CD8-positive, alpha-beta T cell (primary cell): ENCODE measurements at regions of chr9 and their contacts with region 1.

Region 1: GRCh38 chr9:127568971-127569885 is 42.8 kb upstream of the STXBP1 start:
- DNase-seq: peak; percentile 49 to 87 (median 73)
- ATAC-seq: peak; percentile 85
- H3K4me3 ChIP-seq: peak overlapping the region; percentile 63 to 65
- H3K4me3 Mint-ChIP-seq: peak overlapping the region; percentile 83
- H3K27ac ChIP-seq: peak overlapping the region; percentile 4 to 21
- H3K27ac Mint-ChIP-seq: peak overlapping the region; percentile 87
- H3K4me1 ChIP-seq: peaks cover 30% of the 10 kb centered on the region
- H3K4me1 Mint-ChIP-seq: peaks cover 20% of the 10 kb centered on the region
- H3K27me3 ChIP-seq: no peaks in the 10 kb centered on the region
- H3K27me3 Mint-ChIP-seq: no peaks in the 10 kb centered on the region
- CTCF ChIP-seq: no peak

Region 2: GRCh38 chr9:127611899-127612790 is 42.9 kb after region 1 on chr9 and contains the start of gene STXBP1:
- CTCF ChIA-PET with region 1: no interaction called
- POLR2A ChIA-PET with region 1: interaction called, 3 read pairs
- intact Hi-C with region 1: loop called in 1 of 2 experiments (anchors 2 kb)
- DNase-seq: peak; percentile 70 to 92 (median 83)
- ATAC-seq: peak; percentile 80
- H3K4me3 ChIP-seq: peak within 1 kb of the TSS; percentile 59 to 82
- H3K4me3 Mint-ChIP-seq: peak within 1 kb of the TSS; percentile 93
- H3K27ac ChIP-seq: peak within 1 kb of the TSS in 1 of 2 experiments; percentile 42
- H3K27ac Mint-ChIP-seq: peak within 1 kb of the TSS; percentile 92
- H3K4me1 ChIP-seq: peaks cover 32% of the 10 kb centered on the region
- H3K4me1 Mint-ChIP-seq: peaks cover 36% of the 10 kb centered on the region
- H3K27me3 ChIP-seq: peaks cover 4 to 9% of the 10 kb centered on the region in 2 experiments
- H3K27me3 Mint-ChIP-seq: peaks cover 9% of the 10 kb centered on the region
- CTCF ChIP-seq: no peak
- total RNA-seq, gene STXBP1: 7.7 to 8.9 TPM

Region 3: DNA sequence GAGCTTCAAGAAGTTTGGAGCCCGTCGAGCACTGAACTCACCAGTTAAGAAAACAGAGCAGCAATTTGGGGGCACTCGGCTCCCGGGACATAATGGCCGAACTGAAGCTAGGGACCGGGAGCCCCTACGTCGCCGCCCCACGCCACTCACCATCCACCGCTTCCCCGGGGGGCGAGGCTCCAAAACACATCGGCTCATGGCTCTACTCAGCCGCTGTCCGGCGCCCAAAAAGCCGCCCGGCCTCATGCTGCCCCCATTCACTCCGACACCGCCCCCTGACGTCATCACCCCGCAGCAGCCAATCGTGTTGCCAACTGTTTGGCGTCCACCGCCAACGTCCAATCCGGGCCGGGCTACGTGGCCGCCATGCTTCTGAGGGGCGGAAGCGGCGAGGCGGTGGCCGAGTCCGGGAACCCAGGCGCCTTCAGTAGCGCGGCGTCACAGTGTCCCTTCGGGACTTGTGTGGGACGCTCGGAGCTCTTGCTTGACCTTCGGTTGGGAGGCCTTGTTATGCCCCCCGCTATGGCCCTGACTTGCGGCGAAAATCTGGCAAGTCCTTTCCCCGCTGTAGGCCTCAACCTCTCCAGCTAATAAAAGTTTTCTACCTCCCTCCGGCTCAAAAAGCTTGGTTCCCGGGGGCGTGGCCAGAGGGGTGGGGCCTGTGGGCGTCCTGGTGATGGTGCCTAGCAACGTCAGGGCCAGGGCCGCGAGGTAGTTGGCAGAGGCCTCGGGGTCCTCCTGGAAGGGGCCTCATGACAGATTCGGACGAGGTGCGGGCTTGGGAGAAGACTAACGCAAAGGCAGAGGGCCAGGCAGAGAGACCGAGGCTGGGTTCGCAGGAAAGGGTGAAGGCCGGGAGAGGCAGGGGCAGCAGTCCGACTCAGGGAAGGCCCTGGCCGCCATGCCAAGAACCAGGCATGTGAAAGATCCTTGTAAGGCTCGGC is 146.4 kb after region 1 on chr9 and contains the starts of genes PTRH1 and TTC16:
- CTCF ChIA-PET with region 1: no interaction called
- POLR2A ChIA-PET with region 1: no interaction called
- intact Hi-C with region 1: loop called in 1 of 2 experiments (anchors 5 kb)
- DNase-seq: peak; percentile 88 to 98 (median 97)
- ATAC-seq: peak; percentile 93
- H3K4me3 ChIP-seq: peak within 1 kb of the TSS; percentile 88 to 96
- H3K4me3 Mint-ChIP-seq: peak within 1 kb of the TSS; percentile 98
- H3K27ac ChIP-seq: peak within 1 kb of the TSS; percentile 80 to 83
- H3K27ac Mint-ChIP-seq: peak within 1 kb of the TSS; percentile 96
- H3K4me1 ChIP-seq: peaks cover 47% of the 10 kb centered on the region
- H3K4me1 Mint-ChIP-seq: peaks cover 44% of the 10 kb centered on the region
- H3K27me3 ChIP-seq: no peaks in the 10 kb centered on the region
- H3K27me3 Mint-ChIP-seq: no peaks in the 10 kb centered on the region
- CTCF ChIP-seq: no peak
- total RNA-seq, gene PTRH1: 4.6 to 5.3 TPM
- total RNA-seq, gene TTC16: 5.2 to 5.5 TPM

Region 4: DNA sequence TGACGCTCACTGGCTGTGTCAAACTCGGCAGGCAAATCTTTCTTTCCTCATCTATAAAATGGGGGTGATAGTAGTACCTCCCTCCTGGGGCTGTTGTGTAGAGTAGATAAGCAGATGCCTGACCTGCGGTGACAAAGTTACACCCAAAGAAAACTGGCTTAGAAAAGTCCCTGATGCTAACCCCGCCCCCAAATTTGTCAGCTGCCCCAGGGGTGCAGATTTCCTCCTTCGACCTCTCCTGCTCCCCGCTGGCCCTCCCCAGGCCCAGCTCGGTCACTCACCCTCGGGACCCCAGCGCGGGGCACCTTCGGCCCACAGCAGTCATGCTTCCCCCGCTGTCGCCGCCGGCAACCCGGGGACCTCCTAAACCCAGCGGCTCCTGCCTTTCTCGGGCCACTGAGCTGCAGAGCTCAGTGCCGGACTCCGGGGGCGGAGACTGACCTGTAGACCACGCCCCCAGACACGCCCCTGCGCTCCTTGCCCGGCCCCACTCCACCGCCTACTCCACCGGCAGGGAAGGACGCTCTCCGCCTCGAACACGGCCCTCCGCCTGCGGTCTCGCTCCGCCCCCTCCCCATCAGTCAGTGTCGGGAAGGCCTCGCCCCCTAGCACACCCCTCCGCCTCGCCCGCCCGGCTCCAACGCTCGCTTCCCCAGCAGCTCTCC is 201.8 kb after region 1 on chr9:
- CTCF ChIA-PET with region 1: no interaction called
- POLR2A ChIA-PET with region 1: no interaction called
- intact Hi-C with region 1: loop called in 1 of 2 experiments (anchors 1 kb)
- DNase-seq: peak; percentile 81 to 96 (median 93)
- ATAC-seq: peak; percentile 79
- H3K4me3 ChIP-seq: peak overlapping the region; percentile 55 to 65
- H3K4me3 Mint-ChIP-seq: peak overlapping the region; percentile 88
- H3K27ac ChIP-seq: peak overlapping the region; percentile 58 to 83
- H3K27ac Mint-ChIP-seq: peak overlapping the region; percentile 96
- H3K4me1 ChIP-seq: peaks cover 75% of the 10 kb centered on the region
- H3K4me1 Mint-ChIP-seq: peaks cover 73% of the 10 kb centered on the region
- H3K27me3 ChIP-seq: no peaks in the 10 kb centered on the region
- H3K27me3 Mint-ChIP-seq: no peaks in the 10 kb centered on the region
- CTCF ChIP-seq: no peak

Region 5: DNA sequence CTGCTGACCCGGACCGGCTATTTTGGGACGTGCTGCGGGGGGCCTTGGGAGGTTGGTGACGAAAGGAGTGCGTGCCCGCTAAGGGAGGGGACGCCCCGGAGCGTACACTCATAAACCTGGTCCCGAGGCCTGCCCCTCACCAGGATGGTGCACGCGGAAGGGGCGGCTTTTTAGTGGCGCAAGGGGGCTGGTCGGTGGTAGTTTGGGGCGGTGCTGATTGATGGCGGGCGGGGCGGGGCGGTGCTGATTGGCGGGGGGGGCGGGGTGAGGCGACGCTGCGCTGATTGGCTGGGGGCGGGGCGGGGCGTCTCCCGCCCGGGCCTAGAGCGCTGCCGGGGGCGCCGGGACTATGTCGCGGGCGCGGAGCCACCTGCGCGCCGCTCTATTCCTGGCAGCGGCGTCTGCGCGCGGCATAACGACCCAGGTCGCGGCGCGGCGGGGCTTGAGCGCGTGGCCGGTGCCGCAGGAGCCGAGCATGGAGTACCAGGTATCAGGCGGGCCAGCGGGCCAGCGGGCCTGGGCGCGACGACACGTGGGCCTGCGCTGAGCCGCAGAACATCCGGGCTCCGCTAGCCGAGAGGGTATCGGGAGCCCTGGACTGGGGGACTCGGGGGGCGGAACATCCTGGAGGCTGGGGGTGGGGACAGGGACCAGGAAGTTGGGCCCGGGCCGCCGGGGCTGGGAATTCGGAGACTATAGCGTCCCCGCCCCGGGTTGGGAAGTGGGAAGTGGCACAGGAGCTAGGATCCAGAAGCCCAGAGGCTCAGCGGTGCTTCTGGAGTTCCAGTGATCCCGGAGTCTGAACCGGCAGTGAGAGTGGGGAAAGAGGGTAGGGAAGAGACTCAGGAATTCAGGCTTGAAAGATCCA is 233.6 kb after region 1 on chr9 and contains the start of gene FPGS:
- CTCF ChIA-PET with region 1: no interaction called
- POLR2A ChIA-PET with region 1: no interaction called
- intact Hi-C with region 1: loop called (anchors 1 to 2 kb)
- DNase-seq: peak; percentile 57 to 92 (median 81)
- ATAC-seq: peak; percentile 87
- H3K4me3 ChIP-seq: peak within 1 kb of the TSS; percentile 95 to 98
- H3K4me3 Mint-ChIP-seq: peak within 1 kb of the TSS; percentile 92
- H3K27ac ChIP-seq: peak within 1 kb of the TSS; percentile 89
- H3K27ac Mint-ChIP-seq: peak within 1 kb of the TSS; percentile 87
- H3K4me1 ChIP-seq: peaks cover 21% of the 10 kb centered on the region
- H3K4me1 Mint-ChIP-seq: peaks cover 38% of the 10 kb centered on the region
- H3K27me3 ChIP-seq: no peaks in the 10 kb centered on the region
- H3K27me3 Mint-ChIP-seq: no peaks in the 10 kb centered on the region
- CTCF ChIP-seq: no peak
- total RNA-seq, gene FPGS: 91.9 to 95.3 TPM